ENCODE measurements at regions of chr3 and their contacts with region 1.

Region 1: DNA sequence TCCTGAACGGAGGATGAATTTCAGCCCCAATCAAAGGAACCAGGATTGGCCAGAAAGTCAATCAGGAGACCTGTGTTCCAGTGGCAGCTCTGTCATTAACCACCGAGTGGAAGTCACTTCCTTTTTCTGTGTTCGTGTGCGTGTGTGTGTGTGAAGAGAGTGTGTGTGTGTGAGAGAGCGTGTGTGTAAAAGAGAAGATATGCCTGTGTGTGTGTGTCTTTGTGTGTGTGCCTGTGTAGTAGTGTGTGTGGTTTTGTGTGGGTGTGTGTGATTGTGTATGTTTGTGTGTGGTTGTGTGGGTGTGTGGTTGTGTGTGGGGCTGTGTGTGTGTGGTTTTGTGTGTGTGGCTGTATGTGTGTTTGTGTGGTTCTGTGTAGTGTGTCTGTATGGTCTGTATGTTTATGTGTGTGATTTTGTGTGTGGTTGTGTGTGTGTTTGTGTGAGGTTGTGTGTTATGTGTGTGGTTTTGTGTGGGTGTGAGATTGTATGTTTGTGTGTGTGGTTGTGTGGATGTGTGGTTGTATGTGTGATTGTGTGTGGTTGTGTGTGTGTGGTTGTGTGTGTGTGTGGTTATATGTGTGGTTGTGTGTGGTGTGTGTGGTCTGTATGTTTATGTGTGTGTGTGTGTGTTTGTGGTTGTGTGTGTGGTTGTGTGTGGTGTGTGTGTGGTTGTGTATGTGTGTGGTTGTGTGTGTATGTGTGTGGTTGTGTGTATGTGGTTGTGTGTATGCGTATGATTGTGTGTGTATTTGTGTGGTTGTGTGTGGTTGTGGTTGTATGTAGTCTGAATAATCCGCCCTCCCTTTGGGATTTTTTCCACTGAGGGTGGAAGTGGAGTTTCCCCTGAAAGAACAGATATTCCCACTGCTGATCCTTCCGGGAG is 314.4 kb downstream of the SHQ1 start:
- H3K4me3 Mint-ChIP-seq: peak overlapping the region; percentile 0
- H3K27ac Mint-ChIP-seq: peak overlapping the region; percentile 75
- H3K4me1 Mint-ChIP-seq: peaks cover 53% of the 10 kb centered on the region
- H3K27me3 Mint-ChIP-seq: peaks cover 11% of the 10 kb centered on the region

Region 2: DNA sequence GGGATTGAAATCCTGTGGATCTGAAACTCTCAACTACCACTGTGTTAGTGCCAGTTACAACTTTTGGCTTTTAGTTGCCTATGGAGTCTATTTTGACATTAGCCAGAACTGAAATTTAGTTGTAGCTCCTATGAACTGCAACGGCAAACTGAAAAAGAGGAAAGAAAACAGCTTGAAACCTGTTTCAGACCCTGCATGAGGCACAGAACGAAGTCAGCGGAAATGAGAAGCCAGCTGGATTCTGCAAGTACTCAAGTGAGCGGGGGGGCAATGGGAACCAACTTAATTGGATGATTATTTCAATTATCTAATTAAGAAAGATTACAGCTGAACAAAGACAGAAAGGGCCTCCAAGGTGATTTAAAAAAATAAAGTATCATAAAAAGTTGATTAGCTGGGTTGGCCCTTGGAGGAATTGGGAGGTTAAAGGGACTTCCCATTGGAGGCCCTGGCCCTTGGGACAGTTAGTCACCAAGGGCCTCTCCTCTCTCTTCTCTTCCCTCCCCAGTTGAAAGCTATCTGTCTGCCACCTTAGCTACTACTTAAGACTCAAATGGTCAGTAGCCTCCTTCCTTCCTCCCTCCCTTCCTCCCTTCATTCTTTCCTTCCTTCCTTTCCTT is 37.7 kb before region 1 on chr3:
- intact Hi-C with region 1: loop called (anchors 5 kb)
- H3K4me3 Mint-ChIP-seq: no peak overlapping the region
- H3K27ac Mint-ChIP-seq: peak overlapping the region; percentile 77
- H3K4me1 Mint-ChIP-seq: peaks cover 64% of the 10 kb centered on the region
- H3K27me3 Mint-ChIP-seq: no peaks in the 10 kb centered on the region

Region 3: DNA sequence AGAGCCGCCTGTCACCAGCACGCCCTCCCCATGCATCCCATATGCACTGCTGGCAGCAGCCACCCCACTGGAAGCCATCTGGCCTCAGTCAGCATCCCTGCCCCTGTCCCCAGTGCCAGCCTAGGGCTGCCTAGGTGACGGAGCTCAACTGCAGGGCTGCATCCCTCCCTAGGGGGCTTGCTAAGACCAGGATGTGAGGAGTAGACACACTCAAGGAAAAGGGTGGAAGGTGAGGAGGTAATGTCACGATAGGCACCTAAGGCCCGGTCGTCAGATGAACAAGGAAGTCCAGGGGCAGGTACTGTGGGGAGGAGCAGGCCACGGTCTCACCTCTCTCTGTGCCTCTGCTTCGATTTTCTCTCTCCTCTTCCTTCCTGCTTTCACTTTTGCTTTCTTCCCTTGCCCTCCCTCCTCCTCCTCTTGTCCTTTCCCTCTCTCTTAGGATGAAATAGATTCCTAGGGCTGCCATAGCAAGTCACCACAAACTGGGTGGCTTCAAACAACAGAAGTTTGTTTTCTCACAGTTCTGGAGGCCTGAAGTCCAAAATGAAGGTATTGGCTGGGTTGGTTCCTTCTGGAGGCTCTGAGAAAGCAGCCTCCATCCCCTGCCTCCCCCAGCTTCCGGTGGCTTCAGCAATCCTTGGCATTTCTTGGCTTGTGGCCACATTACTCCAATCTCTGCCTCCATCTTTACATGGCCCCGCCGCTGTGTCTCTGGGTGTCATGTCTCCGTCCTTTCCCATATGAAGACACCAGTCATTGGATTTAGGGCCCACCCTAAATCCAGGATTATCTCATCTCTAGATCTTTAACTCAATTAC is 16.1 kb after region 1 on chr3:
- intact Hi-C with region 1: no loop called
- H3K4me3 Mint-ChIP-seq: peak overlapping the region; percentile 62
- H3K27ac Mint-ChIP-seq: peak overlapping the region; percentile 58
- H3K4me1 Mint-ChIP-seq: peaks cover 37% of the 10 kb centered on the region
- H3K27me3 Mint-ChIP-seq: peaks cover 5% of the 10 kb centered on the region

Region 4: DNA sequence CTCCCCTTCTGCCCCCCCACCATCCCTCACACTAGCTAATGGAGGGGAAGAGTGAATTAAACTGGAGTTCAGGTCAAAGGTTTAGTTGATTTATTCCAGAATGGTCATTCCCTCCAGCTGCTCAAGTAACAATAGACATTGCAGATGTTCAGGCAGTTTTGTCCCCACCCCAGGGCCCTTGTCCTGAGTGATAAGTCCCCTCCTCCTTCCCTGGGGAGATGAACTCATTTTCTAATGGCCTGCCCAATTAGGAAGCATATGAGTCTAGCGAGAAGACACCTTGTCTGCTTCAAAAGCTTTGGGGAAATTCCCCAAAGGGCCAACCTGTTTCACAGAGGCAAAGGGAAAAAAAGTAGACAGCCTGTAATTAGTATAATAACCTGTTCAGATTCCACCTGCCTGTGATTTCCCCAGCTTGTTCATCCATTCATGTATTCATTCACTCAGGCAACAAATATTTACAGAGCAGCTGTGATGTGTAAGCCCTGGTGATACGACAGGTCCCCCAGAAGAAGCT is 149.2 kb after region 1 on chr3:
- intact Hi-C with region 1: no loop called
- H3K4me3 Mint-ChIP-seq: no peak overlapping the region
- H3K27ac Mint-ChIP-seq: no peak overlapping the region
- H3K4me1 Mint-ChIP-seq: peaks cover 16% of the 10 kb centered on the region
- H3K27me3 Mint-ChIP-seq: peaks cover 36% of the 10 kb centered on the region

Region 5: DNA sequence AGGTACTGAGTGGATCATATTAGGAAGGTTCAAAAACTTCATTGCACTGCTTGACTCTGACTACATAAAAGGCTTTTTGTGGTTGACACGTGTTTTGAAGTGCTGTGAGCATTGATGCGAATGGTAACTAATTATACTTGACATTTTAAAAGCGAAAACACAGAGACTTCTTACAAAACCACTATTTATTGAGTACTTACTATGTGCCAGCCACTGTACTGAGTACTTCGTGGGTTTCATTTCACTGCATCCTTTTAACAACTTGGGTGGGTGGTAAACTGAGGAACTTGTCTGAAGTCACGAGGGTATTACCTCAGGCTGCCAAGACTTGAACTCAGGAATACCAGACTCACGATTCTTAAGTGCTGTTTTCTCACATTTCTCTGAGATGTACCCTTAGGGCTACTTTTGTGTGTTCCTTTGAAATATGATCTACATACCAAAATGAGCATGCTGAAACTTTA is 417.5 kb after region 1 on chr3:
- intact Hi-C with region 1: no loop called
- H3K4me3 Mint-ChIP-seq: no peak overlapping the region
- H3K27ac Mint-ChIP-seq: no peak overlapping the region
- H3K4me1 Mint-ChIP-seq: no peaks in the 10 kb centered on the region
- H3K27me3 Mint-ChIP-seq: no peaks in the 10 kb centered on the region